BJ (cell line): ENCODE measurements at regions of chr17 and their contacts with region 1.

Region 1: DNA sequence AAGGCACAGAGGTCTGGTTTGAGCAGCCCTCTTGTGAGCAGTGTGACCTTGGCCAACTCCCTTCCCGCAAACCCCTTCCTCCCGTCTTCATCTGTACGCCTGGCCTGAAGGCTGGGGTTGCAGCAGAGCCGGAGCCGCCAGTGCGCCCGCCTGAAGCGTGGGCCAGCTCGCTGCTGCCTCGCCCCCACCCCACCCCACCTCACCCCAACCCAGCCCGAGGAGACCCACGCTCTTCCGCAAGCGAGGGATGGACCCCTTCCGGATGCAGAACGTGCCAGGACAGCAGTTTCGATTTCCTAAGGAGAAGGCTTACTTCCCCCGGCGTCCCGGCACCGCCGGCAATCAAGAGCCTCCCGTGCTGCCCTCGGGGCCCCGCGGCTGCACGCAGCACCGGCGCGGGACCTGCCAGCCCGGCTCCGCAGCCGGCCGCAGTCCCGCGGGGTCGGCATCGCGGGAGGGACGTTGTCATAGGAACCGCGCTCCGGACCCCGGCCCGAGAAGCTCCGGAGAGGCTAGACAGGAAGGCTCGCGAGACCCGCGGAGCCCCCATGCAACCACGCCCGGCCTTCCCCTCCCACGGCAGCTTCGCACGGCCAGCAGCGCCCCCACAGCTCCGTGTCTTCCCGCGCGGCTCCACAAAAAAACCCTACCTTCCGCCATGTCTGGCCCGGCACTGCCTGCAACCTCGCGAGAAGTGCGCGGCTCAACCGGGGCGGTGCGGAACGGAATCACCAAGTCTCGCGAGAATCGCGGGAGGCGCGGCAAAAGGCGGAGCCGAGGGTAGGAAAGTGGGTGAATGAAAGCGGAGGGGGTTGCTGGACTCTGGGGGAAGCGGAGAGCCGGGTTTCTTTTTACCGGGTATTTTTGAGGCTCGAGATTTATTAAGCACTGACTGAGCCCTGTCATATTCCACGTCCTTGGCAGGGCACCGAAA is at the start of gene ANKFY1:
- DNase-seq: peak; percentile 59
- H3K4me3 ChIP-seq: peak within 1 kb of the TSS; percentile 91
- H3K27me3 ChIP-seq: no peaks in the 10 kb centered on the region
- CTCF ChIP-seq: no peak; the same call in 1 of the 2 replicates
- polyA plus RNA-seq, gene ANKFY1: 27.0 and 43.5 TPM in 2 replicates

Region 2: DNA sequence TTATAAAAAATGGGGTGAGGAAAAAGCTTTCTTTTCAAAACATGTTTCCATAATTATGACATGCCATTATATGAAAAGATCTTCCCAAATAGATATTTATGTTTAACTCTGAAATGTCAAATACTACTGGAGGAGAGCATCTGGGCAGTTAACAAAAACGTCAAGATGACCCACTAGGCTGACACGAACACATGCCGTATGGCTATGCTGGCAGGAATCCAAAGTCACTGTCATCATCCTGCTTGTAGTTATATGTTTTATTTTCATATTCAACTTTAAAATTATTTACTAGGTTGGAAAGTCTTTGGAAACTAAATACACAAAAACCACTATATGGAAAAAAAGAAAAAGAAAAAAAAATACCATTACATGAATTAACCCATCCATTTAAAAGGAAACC is 27.1 kb before region 1 on chr17:
- CTCF ChIA-PET with region 1: interaction called, 3 read pairs
- POLR2A ChIA-PET with region 1: interaction called, 10 read pairs
- DNase-seq: no peak
- H3K4me3 ChIP-seq: no peak overlapping the region
- H3K27me3 ChIP-seq: no peaks in the 10 kb centered on the region
- CTCF ChIP-seq: no peak

Region 3: GRCh38 chr17:4249452-4250029 is 14.0 kb before region 1 on chr17:
- CTCF ChIA-PET with region 1: interaction called, 17 read pairs
- POLR2A ChIA-PET with region 1: no interaction called
- DNase-seq: no peak
- H3K4me3 ChIP-seq: no peak overlapping the region
- H3K27me3 ChIP-seq: no peaks in the 10 kb centered on the region
- CTCF ChIP-seq: peak; percentile 59

Region 4: GRCh38 chr17:4407851-4408250 is 144.3 kb after region 1 on chr17:
- CTCF ChIA-PET with region 1: no interaction called
- POLR2A ChIA-PET with region 1: no interaction called
- DNase-seq: no peak
- H3K4me3 ChIP-seq: no peak overlapping the region
- H3K27me3 ChIP-seq: no peaks in the 10 kb centered on the region
- CTCF ChIP-seq: no peak